Lower leg skin (tissue), 4 donors: ENCODE measurements at regions of chr19 and their contacts with region 1.

Region 1: DNA sequence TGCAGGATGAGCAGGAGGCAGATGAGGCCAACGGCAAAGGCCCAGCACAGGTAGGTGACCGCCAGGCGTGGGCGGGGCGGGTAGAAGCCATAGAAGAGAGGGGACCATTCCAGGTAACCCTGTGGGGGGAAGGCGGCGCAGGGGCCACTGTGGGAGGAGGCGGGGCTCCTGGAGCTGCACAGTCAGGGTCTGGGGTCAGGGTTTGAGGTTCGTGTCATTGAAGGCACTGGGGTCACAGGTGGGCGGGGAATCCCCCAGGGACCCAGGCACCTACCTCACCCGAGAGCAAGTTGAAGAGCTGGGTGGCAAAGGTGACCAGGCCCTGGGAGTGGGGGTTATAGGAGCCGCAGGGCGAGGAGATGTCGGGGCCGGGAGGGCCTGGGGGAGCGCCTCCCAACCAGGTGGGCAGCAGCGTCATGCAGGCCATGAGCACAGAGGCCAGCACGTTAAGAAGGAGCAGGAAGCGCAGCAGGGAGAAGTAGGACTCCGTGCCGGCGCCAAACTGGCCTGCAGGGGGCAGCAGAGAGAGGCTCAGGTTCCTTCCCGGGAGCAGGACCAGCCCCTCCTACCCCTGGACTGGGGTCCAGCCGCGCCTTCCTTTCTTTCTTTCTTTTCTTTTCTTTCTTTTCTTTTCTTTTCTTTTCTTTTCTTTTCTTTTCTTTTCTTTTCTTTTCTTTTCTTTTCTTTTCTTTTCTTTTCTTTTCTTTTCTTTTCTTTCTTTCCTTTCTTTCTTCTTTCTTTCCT is 4.6 kb downstream of the TMC4 start:
- DNase-seq: peak; percentile 86 to 98
- H3K4me3 ChIP-seq: no peak overlapping the region
- CTCF ChIP-seq: peak in 1 of 3 donors; percentile 73
- POLR2A ChIP-seq: no peak

Region 2: GRCh38 chr19:54102421-54103169 is 65.8 kb before region 1 on chr19 and contains the start of gene NDUFA3:
- intact Hi-C with region 1: no loop called
- DNase-seq: peak; percentile 97 to 99
- H3K4me3 ChIP-seq: peak within 1 kb of the TSS; percentile 70
- CTCF ChIP-seq: no peak
- POLR2A ChIP-seq: no peak
- total RNA-seq, gene NDUFA3: 2.7 to 39.4 (median 30.2) TPM

Region 3: DNA sequence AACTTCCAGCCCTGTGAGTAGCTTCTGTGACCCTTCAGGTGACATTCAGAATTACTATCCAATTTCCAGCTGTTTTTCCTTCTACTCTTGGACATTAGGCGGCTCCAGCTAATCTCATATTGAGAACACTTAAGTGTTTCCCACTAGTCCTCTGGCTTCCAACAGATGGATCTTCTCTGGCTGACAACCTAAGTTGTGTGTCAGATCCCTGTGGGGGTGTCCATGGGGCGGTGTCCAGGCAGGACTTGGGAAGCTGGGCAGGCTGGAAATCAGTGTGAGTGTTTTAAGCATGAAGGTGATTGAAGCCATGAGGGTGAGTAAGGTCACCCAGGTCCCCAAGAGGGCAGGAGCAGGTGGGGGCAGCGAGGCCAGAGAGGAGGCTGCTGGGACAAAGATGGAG is 20.7 kb before region 1 on chr19:
- intact Hi-C with region 1: no loop called
- DNase-seq: no peak
- H3K4me3 ChIP-seq: no peak overlapping the region
- CTCF ChIP-seq: no peak
- POLR2A ChIP-seq: no peak

Region 4: DNA sequence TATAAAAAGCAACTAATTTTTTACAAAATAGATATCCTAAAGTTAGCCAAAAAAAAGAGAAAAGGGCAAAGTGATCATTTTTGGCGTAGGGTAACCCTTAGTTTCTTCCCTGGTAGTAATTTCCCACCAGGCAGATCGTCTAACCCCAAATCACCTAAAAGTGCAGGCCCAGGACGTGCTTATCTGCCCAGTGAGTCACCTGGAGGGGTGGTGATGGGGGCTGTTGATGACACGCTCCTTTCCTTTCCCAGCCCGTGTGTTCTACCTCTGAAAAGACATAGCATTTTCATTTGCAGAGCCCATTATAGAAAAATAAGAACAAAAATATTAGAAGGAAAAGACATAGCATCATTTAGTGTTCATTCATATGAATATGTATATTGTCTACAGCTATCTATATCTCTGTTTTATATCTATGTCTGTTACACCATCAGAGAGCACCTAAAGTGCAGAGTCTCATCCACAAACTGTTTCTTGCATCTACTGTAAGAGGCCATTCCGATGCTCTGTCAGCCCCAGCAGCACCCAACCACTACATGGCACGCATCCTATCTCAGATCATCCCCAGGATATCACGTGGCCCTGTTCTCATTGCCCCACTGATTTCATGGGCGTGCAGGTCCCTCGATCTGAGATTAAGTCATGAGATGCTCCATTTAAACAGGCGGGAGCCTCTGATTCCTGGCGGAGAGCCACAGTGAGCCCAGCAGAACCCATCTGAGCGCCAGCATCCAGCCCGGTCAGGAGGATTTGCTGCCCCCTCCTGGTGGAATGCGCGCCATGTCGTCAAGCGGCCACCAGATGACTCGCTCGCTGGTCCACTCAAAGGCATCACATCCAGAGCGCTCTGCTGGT is 63.0 kb after region 1 on chr19:
- intact Hi-C with region 1: loop called (anchors 5 kb)
- DNase-seq: peak; percentile 66 to 96
- H3K4me3 ChIP-seq: no peak overlapping the region
- CTCF ChIP-seq: peak in 1 of 3 donors; percentile 75
- POLR2A ChIP-seq: no peak